ENCODE measurements at regions of chr15 and their contacts with region 1.

Region 1: GRCh38 chr15:92808978-92809879 is 90.9 kb upstream of the CHD2 start:
- DNase-seq: peak; percentile 95
- ATAC-seq: peak; percentile 86
- H3K4me3 ChIP-seq: peak overlapping the region; percentile 53 to 76 (median 68); a peak in 5 of 6 replicates
- H3K27ac ChIP-seq: peak overlapping the region; percentile 98
- H3K4me1 ChIP-seq: peaks cover 48% of the 10 kb centered on the region
- H3K27me3 ChIP-seq: no peaks in the 10 kb centered on the region; a peak in 1 of 5 replicates
- CTCF ChIP-seq: peak; percentile 89
- EP300 ChIP-seq: peak in 1 of 2 experiments; percentile 45; a peak in 2 of 4 replicates
- POLR2A ChIP-seq: peak; percentile 84 to 95
- RAD21 ChIP-seq: peak; percentile 99

Region 2: GRCh38 chr15:92820236-92821021 is 11.2 kb after region 1 on chr15:
- CTCF ChIA-PET with region 1: no interaction called
- POLR2A ChIA-PET with region 1: interaction called, 74 read pairs
- in situ Hi-C with region 1: no loop called
- intact Hi-C with region 1: no loop called
- DNase-seq: peak; percentile 84
- ATAC-seq: peak; percentile 92
- H3K4me3 ChIP-seq: peak overlapping the region; percentile 41 to 67 (median 65)
- H3K27ac ChIP-seq: peak overlapping the region; percentile 95
- H3K4me1 ChIP-seq: peaks cover 62% of the 10 kb centered on the region
- H3K27me3 ChIP-seq: no peaks in the 10 kb centered on the region
- CTCF ChIP-seq: no peak
- EP300 ChIP-seq: peak in 1 of 2 experiments; percentile 73; a peak in 1 of 4 replicates
- POLR2A ChIP-seq: peak; percentile 68 to 93
- RAD21 ChIP-seq: no peak

Region 3: DNA sequence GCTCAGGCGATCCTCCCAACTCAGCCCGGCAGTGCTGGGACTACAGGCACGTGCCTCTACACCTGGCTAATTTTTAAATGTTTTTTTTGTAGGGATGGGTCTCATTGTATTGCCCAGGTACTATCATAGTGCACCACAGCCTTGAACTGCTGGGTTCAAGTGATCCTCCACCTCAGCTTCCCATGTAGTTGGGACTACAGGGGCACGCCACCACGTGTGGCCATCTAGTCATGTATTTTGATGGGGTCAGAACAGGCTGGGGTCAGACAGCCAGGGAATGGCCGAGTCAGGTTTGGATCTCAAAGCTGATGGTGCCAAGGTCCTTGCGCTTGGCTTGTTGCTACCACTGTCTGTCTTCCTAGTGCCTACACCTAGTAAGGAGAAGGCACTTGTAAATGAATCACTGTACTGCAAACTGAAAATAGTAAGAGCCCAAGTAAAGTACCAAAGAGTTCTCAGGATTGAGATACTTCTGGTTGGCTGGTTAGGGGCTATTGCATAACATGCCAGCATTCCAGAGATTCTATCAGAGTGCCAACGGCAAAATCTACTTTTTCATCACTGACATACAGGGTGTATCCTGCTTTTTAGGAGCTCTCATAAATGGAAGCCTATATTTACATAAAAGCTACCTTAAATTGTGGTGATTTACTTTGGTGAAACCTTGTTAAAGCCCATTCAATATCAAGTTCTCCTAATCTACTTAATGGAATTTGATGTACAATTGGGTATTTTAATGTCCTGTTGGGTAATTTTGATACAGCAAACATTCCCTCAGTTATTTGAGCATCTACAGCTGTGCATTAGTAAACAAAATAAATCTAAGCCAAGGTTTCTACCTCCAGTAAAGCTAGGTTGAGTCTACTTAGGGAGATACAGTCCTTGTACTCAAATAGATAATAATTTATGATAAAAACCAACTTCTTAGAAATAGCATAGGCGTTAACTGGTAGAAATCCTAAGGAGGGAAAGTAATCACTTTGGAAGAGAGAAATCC is 60.1 kb after region 1 on chr15:
- CTCF ChIA-PET with region 1: no interaction called
- POLR2A ChIA-PET with region 1: interaction called, 14 read pairs
- in situ Hi-C with region 1: no loop called
- intact Hi-C with region 1: no loop called
- DNase-seq: peak; percentile 25
- ATAC-seq: peak; percentile 31
- H3K4me3 ChIP-seq: peak overlapping the region in 2 of 3 experiments; percentile 22 to 45; a peak in 2 of 6 replicates
- H3K27ac ChIP-seq: no peak overlapping the region
- H3K4me1 ChIP-seq: peaks cover 45% of the 10 kb centered on the region
- H3K27me3 ChIP-seq: no peaks in the 10 kb centered on the region; a peak in 1 of 5 replicates
- CTCF ChIP-seq: no peak
- EP300 ChIP-seq: no peak
- POLR2A ChIP-seq: no peak
- RAD21 ChIP-seq: no peak

Region 4: GRCh38 chr15:92891533-92892200 is 82.4 kb after region 1 on chr15:
- CTCF ChIA-PET with region 1: no interaction called
- POLR2A ChIA-PET with region 1: interaction called, 19 read pairs
- in situ Hi-C with region 1: no loop called
- intact Hi-C with region 1: no loop called
- DNase-seq: no peak
- ATAC-seq: no peak
- H3K4me3 ChIP-seq: no peak overlapping the region
- H3K27ac ChIP-seq: no peak overlapping the region
- H3K4me1 ChIP-seq: peaks cover 69% of the 10 kb centered on the region
- H3K27me3 ChIP-seq: no peaks in the 10 kb centered on the region
- CTCF ChIP-seq: no peak
- EP300 ChIP-seq: no peak
- POLR2A ChIP-seq: no peak
- RAD21 ChIP-seq: no peak

Region 5: GRCh38 chr15:92917606-92918407 is 108.6 kb after region 1 on chr15:
- CTCF ChIA-PET with region 1: interaction called, 6 read pairs
- POLR2A ChIA-PET with region 1: interaction called, 62 read pairs
- in situ Hi-C with region 1: no loop called
- intact Hi-C with region 1: no loop called
- DNase-seq: peak; percentile 87
- ATAC-seq: peak; percentile 39
- H3K4me3 ChIP-seq: no peak overlapping the region
- H3K27ac ChIP-seq: peak overlapping the region; percentile 60
- H3K4me1 ChIP-seq: peaks cover 98% of the 10 kb centered on the region
- H3K27me3 ChIP-seq: no peaks in the 10 kb centered on the region
- CTCF ChIP-seq: peak; percentile 84
- EP300 ChIP-seq: no peak
- POLR2A ChIP-seq: no peak
- RAD21 ChIP-seq: peak; percentile 81

Region 6: GRCh38 chr15:92949604-92950249 is 140.5 kb after region 1 on chr15:
- CTCF ChIA-PET with region 1: no interaction called
- POLR2A ChIA-PET with region 1: interaction called, 10 read pairs
- in situ Hi-C with region 1: no loop called
- intact Hi-C with region 1: no loop called
- DNase-seq: peak; percentile 32
- ATAC-seq: peak; percentile 73
- H3K4me3 ChIP-seq: no peak overlapping the region
- H3K27ac ChIP-seq: peak overlapping the region; percentile 87
- H3K4me1 ChIP-seq: peaks cover 22% of the 10 kb centered on the region
- H3K27me3 ChIP-seq: no peaks in the 10 kb centered on the region
- CTCF ChIP-seq: no peak
- EP300 ChIP-seq: peak in 1 of 2 experiments; percentile 52; a peak in 1 of 4 replicates
- POLR2A ChIP-seq: no peak
- RAD21 ChIP-seq: no peak